Sigmoid colon (tissue), 7 donors: ENCODE measurements at regions of chr13 and their contacts with region 1.

Region 1: GRCh38 chr13:46553886-46554858 is 1.2 kb downstream of the LRCH1 start:
- DNase-seq: peak; percentile 86
- H3K4me3 ChIP-seq: peak overlapping the region; percentile 79 to 98 (median 93)
- H3K27ac ChIP-seq: peak overlapping the region; percentile 93 to 97 (median 94)
- H3K4me1 ChIP-seq: peaks cover 0 to 45% (median 29%) of the 10 kb centered on the region in 4 donors
- H3K27me3 ChIP-seq: no peaks in the 10 kb centered on the region
- CTCF ChIP-seq: peak in 2 of 4 experiments; percentile 39 to 48
- EP300 ChIP-seq: no peak
- POLR2A ChIP-seq: peak in 1 of 2 donors; percentile 4

Region 2: GRCh38 chr13:46229251-46229650 is 324.9 kb before region 1 on chr13:
- intact Hi-C with region 1: no loop called
- DNase-seq: no peak
- H3K4me3 ChIP-seq: no peak overlapping the region
- H3K27ac ChIP-seq: no peak overlapping the region
- H3K4me1 ChIP-seq: no peaks in the 10 kb centered on the region
- H3K27me3 ChIP-seq: no peaks in the 10 kb centered on the region
- CTCF ChIP-seq: no peak
- EP300 ChIP-seq: no peak
- POLR2A ChIP-seq: no peak

Region 3: GRCh38 chr13:46615888-46616531 is 61.8 kb after region 1 on chr13:
- intact Hi-C with region 1: loop called (anchors 2 kb)
- DNase-seq: no peak
- H3K4me3 ChIP-seq: peak overlapping the region; percentile 9 to 38 (median 34)
- H3K27ac ChIP-seq: peak overlapping the region; percentile 77 to 87 (median 82)
- H3K4me1 ChIP-seq: peaks cover 0 to 59% (median 46%) of the 10 kb centered on the region in 4 donors
- H3K27me3 ChIP-seq: no peaks in the 10 kb centered on the region
- CTCF ChIP-seq: no peak
- EP300 ChIP-seq: no peak
- POLR2A ChIP-seq: no peak

Region 4: GRCh38 chr13:46656786-46657185 is 102.6 kb after region 1 on chr13:
- intact Hi-C with region 1: no loop called
- DNase-seq: no peak
- H3K4me3 ChIP-seq: no peak overlapping the region
- H3K27ac ChIP-seq: peak overlapping the region; percentile 76 to 87 (median 82)
- H3K4me1 ChIP-seq: peaks cover 0 to 63% (median 37%) of the 10 kb centered on the region in 4 donors
- H3K27me3 ChIP-seq: no peaks in the 10 kb centered on the region
- CTCF ChIP-seq: no peak
- EP300 ChIP-seq: no peak
- POLR2A ChIP-seq: no peak

Region 5: GRCh38 chr13:46679369-46680120 is 125.4 kb after region 1 on chr13:
- intact Hi-C with region 1: loop called (anchors 5 kb)
- DNase-seq: no peak
- H3K4me3 ChIP-seq: peak overlapping the region; percentile 15 to 42 (median 33)
- H3K27ac ChIP-seq: peak overlapping the region; percentile 74 to 81 (median 76)
- H3K4me1 ChIP-seq: peaks cover 0 to 44% (median 30%) of the 10 kb centered on the region in 4 donors
- H3K27me3 ChIP-seq: no peaks in the 10 kb centered on the region
- CTCF ChIP-seq: no peak
- EP300 ChIP-seq: no peak
- POLR2A ChIP-seq: no peak

Region 6: DNA sequence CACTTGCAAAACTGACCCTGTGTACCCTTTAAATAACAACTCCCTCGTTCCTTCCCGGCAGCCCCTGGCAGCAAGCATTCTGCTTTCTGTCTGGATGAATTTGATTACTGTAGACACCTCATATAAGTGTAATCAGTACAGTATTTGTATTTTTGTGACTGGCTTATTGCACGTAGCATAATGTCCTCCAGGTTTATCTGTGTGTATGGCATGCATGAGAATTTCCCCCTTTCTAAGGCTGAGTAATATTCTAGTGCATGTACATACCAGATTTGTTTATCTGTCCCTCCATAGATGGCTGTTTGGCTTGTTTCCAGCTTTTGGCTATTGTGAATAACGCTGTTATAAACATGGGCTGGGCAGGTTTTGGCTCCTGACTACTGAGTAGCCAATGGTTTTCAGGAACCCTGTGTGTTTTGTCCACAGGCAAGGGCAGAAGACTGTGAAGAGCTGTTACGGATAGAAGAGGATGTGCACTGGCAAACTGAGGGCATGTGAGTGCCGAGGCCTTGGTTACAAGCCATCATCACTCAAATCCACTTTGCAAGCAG is 144.8 kb after region 1 on chr13:
- intact Hi-C with region 1: loop called (anchors 5 kb)
- DNase-seq: no peak
- H3K4me3 ChIP-seq: no peak overlapping the region
- H3K27ac ChIP-seq: peak overlapping the region in 3 of 4 donors; percentile 58 to 76 (median 70)
- H3K4me1 ChIP-seq: peaks cover 0 to 26% (median 24%) of the 10 kb centered on the region in 4 donors
- H3K27me3 ChIP-seq: no peaks in the 10 kb centered on the region
- CTCF ChIP-seq: no peak
- EP300 ChIP-seq: no peak
- POLR2A ChIP-seq: no peak

Region 7: GRCh38 chr13:46721054-46721453 is 166.9 kb after region 1 on chr13:
- intact Hi-C with region 1: loop called (anchors 1 kb)
- DNase-seq: no peak
- H3K4me3 ChIP-seq: no peak overlapping the region
- H3K27ac ChIP-seq: no peak overlapping the region
- H3K4me1 ChIP-seq: peaks cover 0 to 4% (median 2%) of the 10 kb centered on the region in 4 donors
- H3K27me3 ChIP-seq: no peaks in the 10 kb centered on the region
- CTCF ChIP-seq: peak; percentile 56 to 83 (median 66)
- EP300 ChIP-seq: no peak
- POLR2A ChIP-seq: no peak

Region 8: GRCh38 chr13:46796515-46797474 is 242.6 kb after region 1 on chr13 and contains the start of gene ESD:
- intact Hi-C with region 1: loop called (anchors 2 kb)
- DNase-seq: peak; percentile 97
- H3K4me3 ChIP-seq: peak within 1 kb of the TSS; percentile 68 to 83 (median 76)
- H3K27ac ChIP-seq: peak within 1 kb of the TSS; percentile 87 to 94 (median 91)
- H3K4me1 ChIP-seq: peaks cover 0 to 43% (median 37%) of the 10 kb centered on the region in 4 donors
- H3K27me3 ChIP-seq: no peaks in the 10 kb centered on the region
- CTCF ChIP-seq: no peak
- EP300 ChIP-seq: no peak
- POLR2A ChIP-seq: peak; percentile 65 to 74
- total RNA-seq, gene ESD: 107 to 150 (median 128) TPM

Region 9: DNA sequence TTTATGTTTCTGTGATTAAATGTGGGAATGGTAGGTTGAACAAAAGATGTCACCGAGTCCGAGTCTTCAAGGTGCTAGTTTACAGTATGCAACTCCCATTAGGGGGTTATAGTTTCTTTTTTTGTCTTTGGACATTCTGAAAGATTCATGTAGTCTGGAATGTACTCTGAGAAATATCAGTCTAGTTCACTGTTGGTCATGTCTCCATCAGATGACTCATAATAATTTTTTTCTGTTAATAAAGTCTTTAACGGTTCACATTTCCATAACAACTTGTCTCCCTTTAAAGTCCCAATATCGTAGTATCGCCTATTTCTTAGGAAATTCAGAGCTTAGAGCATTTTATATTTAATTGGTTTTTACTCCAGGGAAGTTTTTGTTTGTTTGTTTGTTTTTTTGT is 256.3 kb after region 1 on chr13:
- intact Hi-C with region 1: no loop called
- DNase-seq: no peak
- H3K4me3 ChIP-seq: no peak overlapping the region
- H3K27ac ChIP-seq: no peak overlapping the region
- H3K4me1 ChIP-seq: no peaks in the 10 kb centered on the region
- H3K27me3 ChIP-seq: no peaks in the 10 kb centered on the region
- CTCF ChIP-seq: no peak
- EP300 ChIP-seq: no peak
- POLR2A ChIP-seq: no peak

Region 10: GRCh38 chr13:47233734-47234133 is 679.6 kb after region 1 on chr13:
- intact Hi-C with region 1: no loop called
- DNase-seq: no peak
- H3K4me3 ChIP-seq: no peak overlapping the region
- H3K27ac ChIP-seq: no peak overlapping the region
- H3K4me1 ChIP-seq: no peaks in the 10 kb centered on the region
- H3K27me3 ChIP-seq: no peaks in the 10 kb centered on the region
- CTCF ChIP-seq: no peak
- EP300 ChIP-seq: no peak
- POLR2A ChIP-seq: no peak